Heart left ventricle (tissue), 16 donors: ENCODE measurements at regions of chrX and their contacts with region 1.

Region 1: GRCh38 chrX:8731559-8732395 is at the start of gene ANOS1:
- DNase-seq: peak; percentile 69 to 79 (median 76)
- ATAC-seq: peak; percentile 96 to 99 (median 96)
- H3K4me3 ChIP-seq: peak within 1 kb of the TSS; percentile 29 to 78 (median 58)
- H3K27ac ChIP-seq: peak within 1 kb of the TSS in 5 of 12 donors; percentile 34 to 57 (median 43)
- H3K4me1 ChIP-seq: peaks cover 0 to 21% (median 0%) of the 10 kb centered on the region in 12 donors
- H3K27me3 ChIP-seq: peaks cover 0 to 49% (median 0%) of the 10 kb centered on the region in 9 donors
- CTCF ChIP-seq: peak in 2 of 12 donors; percentile 8 to 18
- POLR2A ChIP-seq: no peak
- total RNA-seq, gene ANOS1: 2.5 to 9.5 (median 5.7) TPM

Region 2: DNA sequence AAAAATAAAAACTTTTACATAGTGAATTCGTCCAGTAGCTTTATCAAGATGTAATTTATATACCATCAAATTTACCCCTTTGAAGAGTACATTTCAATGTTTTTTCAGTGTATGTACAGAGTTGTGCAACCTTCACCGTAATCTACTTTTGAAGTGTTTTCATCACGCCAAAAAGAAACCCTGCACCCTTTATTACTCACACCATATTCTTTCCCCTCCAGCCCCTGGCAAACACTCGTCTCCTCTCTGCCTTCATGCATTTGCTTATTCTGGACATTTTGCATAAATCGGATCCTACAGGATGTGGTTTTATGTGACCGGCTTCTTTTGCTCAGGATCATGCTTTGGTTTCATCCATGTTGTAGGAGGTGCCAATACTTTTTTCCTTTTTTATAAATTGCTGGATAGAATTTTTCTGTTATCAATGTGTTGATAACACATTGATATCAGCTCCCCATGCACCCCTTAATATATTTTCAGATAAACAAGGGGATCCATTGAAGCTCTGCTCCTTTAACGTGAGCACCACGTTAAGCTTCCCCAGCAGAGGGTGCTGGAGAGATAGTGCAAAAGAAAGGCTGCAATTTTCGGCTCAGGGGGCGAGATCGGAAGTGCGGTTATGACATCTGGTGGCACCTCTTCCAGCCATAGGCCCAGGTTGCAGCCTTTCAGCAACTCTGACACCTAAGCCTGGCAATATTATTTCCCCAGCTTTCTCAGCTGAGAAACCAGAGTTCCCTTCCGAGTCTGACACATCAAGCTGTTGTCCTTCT is 367.2 kb before region 1 on chrX:
- intact Hi-C with region 1: loop called in 9 of 10 experiments (anchors 5 to 10 kb)
- DNase-seq: peak in 3 of 5 donors; percentile 5 to 36 (median 19)
- ATAC-seq: peak in 2 of 4 donors; percentile 24 to 51
- H3K4me3 ChIP-seq: no peak overlapping the region
- H3K27ac ChIP-seq: no peak overlapping the region
- H3K4me1 ChIP-seq: peaks cover 0 to 12% (median 0%) of the 10 kb centered on the region in 12 donors
- H3K27me3 ChIP-seq: no peaks in the 10 kb centered on the region
- CTCF ChIP-seq: peak; percentile 21 to 56 (median 40)
- POLR2A ChIP-seq: no peak